ENCODE measurements at regions of chr21 and their contacts with region 1.

Region 1: DNA sequence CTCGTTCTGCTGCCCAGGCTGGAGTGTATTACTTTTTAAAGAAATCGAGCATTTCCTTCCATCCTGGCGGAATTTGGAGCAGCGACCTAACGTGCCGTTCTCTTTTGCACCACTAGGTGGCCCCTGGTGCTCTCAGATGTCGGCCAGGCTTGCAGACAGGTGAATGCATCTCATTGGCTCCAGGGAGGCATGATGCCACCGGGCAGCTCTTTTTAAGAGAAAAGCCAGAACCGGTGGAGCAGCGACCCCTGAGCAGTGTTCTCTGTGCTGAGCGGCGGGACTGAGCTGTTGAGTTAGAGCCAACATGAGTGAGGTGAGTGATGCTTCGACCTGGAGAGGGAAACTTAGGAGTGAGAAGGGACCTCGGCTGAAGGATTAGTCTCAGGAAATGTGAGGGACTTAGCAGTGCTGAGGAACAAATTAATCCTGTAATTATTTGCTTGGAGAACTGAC is at the start of gene PCP4:
- DNase-seq: peak; percentile 42
- H3K4me3 ChIP-seq: no peak within 1 kb of the TSS
- H3K27ac ChIP-seq: no peak within 1 kb of the TSS
- H3K4me1 ChIP-seq: no peaks in the 10 kb centered on the region
- H3K27me3 ChIP-seq: peaks cover 4% of the 10 kb centered on the region
- CTCF ChIP-seq: peak; percentile 91 to 95
- total RNA-seq, gene PCP4: not detected

Region 2: DNA sequence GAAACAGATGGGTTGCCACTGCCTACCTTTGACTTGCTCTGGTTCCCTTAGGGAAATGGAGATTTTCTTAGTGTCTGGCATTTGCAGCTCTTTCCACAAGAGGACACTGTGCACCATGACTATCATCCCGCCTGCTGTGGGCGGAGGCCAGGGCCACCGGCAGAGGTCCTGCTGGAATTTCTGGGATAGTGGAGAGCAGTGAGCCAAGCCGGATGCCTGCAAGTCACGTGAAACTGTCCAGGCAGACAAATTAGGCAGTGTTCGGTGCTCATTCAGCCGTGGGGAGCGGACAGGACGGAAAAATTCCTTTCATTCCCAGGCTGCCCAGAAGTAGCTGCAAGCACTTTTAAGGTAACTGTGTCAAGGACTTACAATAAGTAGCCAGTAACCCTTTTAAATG is 78.8 kb before region 1 on chr21:
- CTCF ChIA-PET with region 1: no interaction called
- dilution Hi-C with region 1: loop called (anchors 5 kb)
- in situ Hi-C with region 1: no loop called
- intact Hi-C with region 1: loop called (anchors 10 kb)
- DNase-seq: peak; percentile 71
- H3K4me3 ChIP-seq: peak overlapping the region in 1 of 3 experiments; percentile 11
- H3K27ac ChIP-seq: no peak overlapping the region
- H3K4me1 ChIP-seq: no peaks in the 10 kb centered on the region
- H3K27me3 ChIP-seq: no peaks in the 10 kb centered on the region
- CTCF ChIP-seq: peak; percentile 94 to 96

Region 3: DNA sequence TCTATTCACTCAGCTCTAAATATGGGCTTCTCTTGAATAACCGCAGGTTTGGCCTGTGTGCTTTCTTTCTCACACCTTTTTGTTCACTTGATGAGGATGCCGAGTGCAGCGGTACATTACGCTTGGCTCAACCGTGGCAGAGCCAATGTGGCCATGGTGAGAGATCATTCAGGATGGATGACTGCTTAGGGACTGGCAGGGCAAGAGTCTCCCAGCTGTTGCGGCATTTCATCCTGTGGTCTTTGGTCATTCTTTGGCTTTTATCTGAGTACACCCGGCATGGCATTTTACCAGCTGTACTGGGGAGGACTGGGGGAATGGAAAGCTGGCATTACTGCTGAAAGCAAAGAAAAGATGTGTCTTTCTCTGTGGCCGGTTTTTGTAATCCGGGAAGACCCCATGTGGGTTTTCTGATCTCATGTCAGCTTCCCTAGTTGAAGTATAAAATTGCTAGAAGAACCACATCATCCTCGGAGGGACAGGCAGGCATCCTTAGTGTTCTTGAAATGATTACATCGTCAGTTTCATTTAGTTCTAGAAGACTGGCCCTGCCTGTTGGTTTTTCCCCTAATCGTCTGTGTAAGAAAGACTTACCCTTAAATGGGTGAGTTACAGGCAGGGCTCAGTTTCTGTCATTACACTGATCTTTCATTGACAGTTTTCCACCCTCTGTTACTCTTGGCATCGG is 15.1 kb after region 1 on chr21:
- CTCF ChIA-PET with region 1: no interaction called
- dilution Hi-C with region 1: no loop called
- in situ Hi-C with region 1: no loop called
- intact Hi-C with region 1: no loop called
- DNase-seq: no peak
- H3K4me3 ChIP-seq: no peak overlapping the region
- H3K27ac ChIP-seq: no peak overlapping the region
- H3K4me1 ChIP-seq: no peaks in the 10 kb centered on the region
- H3K27me3 ChIP-seq: no peaks in the 10 kb centered on the region
- CTCF ChIP-seq: no peak

Region 4: DNA sequence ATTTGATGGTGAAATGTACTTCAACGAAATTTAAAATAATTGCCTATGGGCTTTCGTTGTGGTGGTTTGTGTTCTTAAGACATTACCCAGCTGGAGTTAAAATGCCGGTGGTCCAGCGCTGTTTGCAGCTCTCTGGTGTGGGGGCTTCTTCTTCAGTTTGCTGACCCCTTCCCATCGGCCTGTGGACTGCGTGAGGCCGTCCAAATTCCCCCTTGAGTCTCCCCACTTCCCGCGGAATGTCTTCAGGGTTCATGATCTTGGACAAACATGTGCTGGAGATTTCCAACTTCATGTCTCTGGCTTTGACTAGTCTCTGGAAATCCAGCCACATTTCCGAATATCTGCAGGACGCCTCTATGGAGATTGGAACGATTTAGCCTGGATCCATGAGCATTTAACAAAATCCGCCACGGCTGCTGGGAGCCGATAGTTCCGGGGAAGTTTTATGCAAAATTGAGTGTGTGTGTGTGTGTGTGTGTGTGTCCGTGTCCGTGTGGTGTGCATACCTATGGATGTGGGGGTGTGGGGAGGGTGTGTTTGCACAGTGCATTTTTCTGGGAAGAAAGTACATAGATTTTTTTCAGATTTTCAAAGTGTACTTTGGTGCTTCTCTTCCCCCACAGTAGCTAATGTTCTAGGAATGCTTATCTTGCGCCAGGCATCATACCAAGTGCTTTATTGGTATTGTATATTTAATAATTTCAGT is 117.2 kb after region 1 on chr21:
- CTCF ChIA-PET with region 1: no interaction called
- dilution Hi-C with region 1: no loop called
- in situ Hi-C with region 1: no loop called
- intact Hi-C with region 1: no loop called
- DNase-seq: no peak
- H3K4me3 ChIP-seq: no peak overlapping the region
- H3K27ac ChIP-seq: no peak overlapping the region
- H3K4me1 ChIP-seq: no peaks in the 10 kb centered on the region
- H3K27me3 ChIP-seq: no peaks in the 10 kb centered on the region
- CTCF ChIP-seq: no peak

Region 5: DNA sequence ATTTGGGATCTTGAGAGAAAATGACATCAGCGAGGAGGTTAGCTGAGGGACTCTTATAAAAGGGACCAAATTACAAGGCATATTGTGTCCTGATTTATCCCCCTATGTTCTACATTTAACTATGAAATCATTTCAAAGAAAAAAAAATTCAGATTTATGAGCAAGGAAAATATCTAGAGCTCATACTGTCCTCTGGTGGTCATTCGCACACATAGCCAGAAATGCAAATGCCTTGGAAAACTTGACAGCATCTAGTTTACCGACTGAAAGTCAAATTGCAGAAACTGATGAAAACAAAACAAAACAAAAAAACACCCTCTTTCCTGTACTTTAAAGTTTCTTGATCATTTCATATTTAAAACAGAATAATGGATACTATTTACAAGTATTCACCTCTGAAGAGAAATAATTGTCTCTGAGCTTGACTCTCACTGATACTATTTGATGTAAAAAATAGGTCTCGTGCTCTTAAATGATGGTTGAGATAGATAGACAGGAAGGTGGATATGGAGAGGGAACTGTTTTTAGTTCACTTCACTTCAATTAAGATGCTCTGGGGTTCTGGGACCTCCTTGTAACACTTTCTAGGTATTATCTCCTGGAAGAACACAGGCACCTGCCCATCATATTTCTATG is 253.8 kb after region 1 on chr21:
- CTCF ChIA-PET with region 1: interaction called, 3 read pairs
- dilution Hi-C with region 1: loop called (anchors 10 kb)
- in situ Hi-C with region 1: loop called (anchors 10 to 25 kb)
- intact Hi-C with region 1: loop called (anchors 1 kb)
- DNase-seq: no peak
- H3K4me3 ChIP-seq: no peak overlapping the region
- H3K27ac ChIP-seq: no peak overlapping the region
- H3K4me1 ChIP-seq: peaks cover 7% of the 10 kb centered on the region
- H3K27me3 ChIP-seq: no peaks in the 10 kb centered on the region
- CTCF ChIP-seq: peak; percentile 94 to 97

Region 6: DNA sequence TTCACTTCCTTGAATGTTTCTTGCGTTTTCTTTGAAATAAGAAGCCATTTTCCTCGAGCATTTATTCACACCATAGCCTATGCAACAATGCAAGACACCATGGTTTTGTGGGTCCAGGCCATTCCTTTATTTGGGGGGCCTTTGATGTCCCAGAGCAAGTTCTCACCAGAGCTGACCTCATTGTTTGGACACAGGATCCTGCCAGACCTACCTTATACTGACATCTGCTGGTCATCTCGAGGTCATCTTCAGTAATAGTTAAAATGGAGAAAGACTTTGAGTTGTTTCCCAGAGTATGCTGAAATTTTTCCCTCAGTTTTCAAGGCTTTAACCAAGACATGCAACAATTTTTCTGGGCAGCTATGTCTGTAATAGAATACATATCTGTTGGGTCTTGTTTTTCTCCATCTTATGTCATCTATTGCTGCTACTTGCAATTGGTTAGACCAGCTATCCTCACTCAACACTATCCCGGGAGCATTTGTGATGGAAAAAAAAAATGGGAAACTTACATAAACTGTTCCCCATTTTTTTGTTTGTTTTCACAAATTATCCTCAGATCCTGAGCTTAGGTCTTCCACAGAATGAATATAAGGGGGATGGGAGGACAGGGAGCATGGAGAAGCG is 1266.8 kb after region 1 on chr21:
- CTCF ChIA-PET with region 1: no interaction called
- dilution Hi-C with region 1: no loop called
- in situ Hi-C with region 1: no loop called
- intact Hi-C with region 1: loop called (anchors 10 kb)
- DNase-seq: peak; percentile 23
- H3K4me3 ChIP-seq: no peak overlapping the region
- H3K27ac ChIP-seq: no peak overlapping the region
- H3K4me1 ChIP-seq: peaks cover 3% of the 10 kb centered on the region
- H3K27me3 ChIP-seq: no peaks in the 10 kb centered on the region
- CTCF ChIP-seq: peak; percentile 53 to 68